Left ventricle myocardium superior (tissue), 1 donor: ENCODE measurements at regions of chr7 and their contacts with region 1.

Region 1: DNA sequence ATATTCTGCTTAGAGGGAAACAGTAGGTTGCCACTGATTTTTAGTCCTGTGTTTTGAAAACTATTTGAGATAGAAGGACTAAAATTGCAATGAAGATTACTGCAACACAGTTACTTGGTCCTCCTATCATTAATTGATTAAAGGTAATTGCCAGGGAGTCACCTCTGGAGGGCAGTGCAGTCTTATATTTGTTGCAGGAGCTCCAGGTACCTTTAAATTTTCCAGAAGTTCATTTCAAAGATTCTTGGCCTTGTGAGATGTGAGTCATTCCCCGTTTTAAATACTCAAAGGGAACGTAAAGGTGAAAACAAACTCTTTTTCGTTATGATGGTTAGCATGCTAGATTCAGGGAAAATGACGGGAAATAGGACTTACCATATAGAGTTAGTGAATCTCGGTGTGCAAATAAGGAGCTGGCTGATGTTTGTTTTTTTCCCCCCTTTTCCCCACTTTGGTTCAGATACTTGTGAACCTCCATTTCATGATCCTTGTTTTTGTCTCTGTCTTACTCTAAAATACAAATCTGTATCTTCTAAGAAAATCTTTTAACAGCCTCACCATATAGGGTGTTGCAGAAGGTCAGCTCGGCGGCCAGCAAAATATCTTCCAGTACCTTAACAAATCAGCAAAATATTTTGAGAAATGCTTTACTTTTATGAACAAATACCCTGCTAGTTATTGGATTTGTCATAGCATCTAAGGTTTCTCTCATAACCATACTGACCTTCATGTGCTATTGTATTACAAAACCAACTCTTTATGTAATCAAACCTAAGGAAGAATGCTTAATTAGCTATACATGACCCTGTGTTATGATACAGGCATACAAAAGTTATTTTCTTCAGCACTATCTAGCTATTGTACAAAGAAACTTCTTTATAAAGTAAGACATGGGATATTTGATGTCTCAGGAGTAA is 143.0 kb upstream of the HDAC9 start:
- DNase-seq: peak; percentile 15
- ATAC-seq: peak; percentile 62

Region 2: GRCh38 chr7:18495412-18496340 is 143.1 kb after region 1 on chr7 and contains the start of gene HDAC9:
- intact Hi-C with region 1: loop called (anchors 10 kb)
- DNase-seq: peak; percentile 34
- ATAC-seq: peak; percentile 93
- total RNA-seq, gene HDAC9: 30.7 TPM

Region 3: GRCh38 chr7:18570890-18571478 is 218.4 kb after region 1 on chr7:
- intact Hi-C with region 1: loop called (anchors 5 kb)
- DNase-seq: no peak
- ATAC-seq: no peak

Region 4: DNA sequence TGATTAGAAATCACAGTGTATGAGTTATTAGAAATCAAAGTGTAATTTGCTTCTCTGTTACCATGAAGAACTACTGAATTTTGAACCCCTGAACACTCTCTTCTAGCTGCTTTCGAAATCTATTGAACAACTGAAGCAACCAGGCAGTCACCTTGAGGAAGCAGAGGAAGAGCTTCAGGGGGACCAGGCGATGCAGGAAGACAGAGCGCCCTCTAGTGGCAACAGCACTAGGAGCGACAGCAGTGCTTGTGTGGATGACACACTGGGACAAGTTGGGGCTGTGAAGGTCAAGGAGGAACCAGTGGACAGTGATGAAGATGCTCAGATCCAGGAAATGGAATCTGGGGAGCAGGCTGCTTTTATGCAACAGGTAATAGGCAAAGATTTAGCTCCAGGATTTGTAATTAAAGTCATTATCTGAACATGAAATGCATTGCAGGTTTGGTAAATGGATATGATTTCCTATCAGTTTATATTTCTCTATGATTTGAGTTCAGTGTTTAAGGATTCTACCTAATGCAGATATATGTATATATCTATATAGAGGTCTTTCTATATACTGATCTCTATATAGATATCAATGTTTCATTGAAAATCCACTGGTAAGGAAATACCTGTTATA is 313.6 kb after region 1 on chr7:
- intact Hi-C with region 1: loop called (anchors 10 kb)
- DNase-seq: peak; percentile 82
- ATAC-seq: peak; percentile 93